ENCODE measurements at regions of chr2 and their contacts with region 1.

Region 1: GRCh38 chr2:134897932-134898331 is 20.7 kb upstream of the CCNT2 start:
- DNase-seq: peak; percentile 24
- ATAC-seq: no peak
- H3K4me3 ChIP-seq: no peak overlapping the region
- H3K4me3 Mint-ChIP-seq: no peak overlapping the region
- H3K27ac ChIP-seq: no peak overlapping the region
- H3K27ac Mint-ChIP-seq: no peak overlapping the region
- H3K4me1 ChIP-seq: no peaks in the 10 kb centered on the region
- H3K4me1 Mint-ChIP-seq: no peaks in the 10 kb centered on the region
- H3K27me3 ChIP-seq: no peaks in the 10 kb centered on the region
- H3K27me3 Mint-ChIP-seq: no peaks in the 10 kb centered on the region
- CTCF ChIP-seq: peak; percentile 84

Region 2: GRCh38 chr2:134453973-134454372 is 444.0 kb before region 1 on chr2:
- CTCF ChIA-PET with region 1: interaction called, 35 read pairs
- POLR2A ChIA-PET with region 1: no interaction called
- intact Hi-C with region 1: loop called (anchors 1 kb)
- DNase-seq: no peak
- ATAC-seq: no peak
- H3K4me3 ChIP-seq: no peak overlapping the region
- H3K4me3 Mint-ChIP-seq: no peak overlapping the region
- H3K27ac ChIP-seq: no peak overlapping the region
- H3K27ac Mint-ChIP-seq: no peak overlapping the region
- H3K4me1 ChIP-seq: no peaks in the 10 kb centered on the region
- H3K4me1 Mint-ChIP-seq: no peaks in the 10 kb centered on the region
- H3K27me3 ChIP-seq: no peaks in the 10 kb centered on the region
- H3K27me3 Mint-ChIP-seq: no peaks in the 10 kb centered on the region
- CTCF ChIP-seq: no peak

Region 3: GRCh38 chr2:134460583-134460998 is 437.3 kb before region 1 on chr2:
- CTCF ChIA-PET with region 1: interaction called, 20 read pairs
- POLR2A ChIA-PET with region 1: no interaction called
- intact Hi-C with region 1: no loop called
- DNase-seq: peak; percentile 59
- ATAC-seq: peak; percentile 76
- H3K4me3 ChIP-seq: no peak overlapping the region
- H3K4me3 Mint-ChIP-seq: no peak overlapping the region
- H3K27ac ChIP-seq: no peak overlapping the region
- H3K27ac Mint-ChIP-seq: peak overlapping the region; percentile 37
- H3K4me1 ChIP-seq: no peaks in the 10 kb centered on the region
- H3K4me1 Mint-ChIP-seq: peaks cover 3% of the 10 kb centered on the region
- H3K27me3 ChIP-seq: no peaks in the 10 kb centered on the region
- H3K27me3 Mint-ChIP-seq: no peaks in the 10 kb centered on the region
- CTCF ChIP-seq: peak; percentile 61

Region 4: DNA sequence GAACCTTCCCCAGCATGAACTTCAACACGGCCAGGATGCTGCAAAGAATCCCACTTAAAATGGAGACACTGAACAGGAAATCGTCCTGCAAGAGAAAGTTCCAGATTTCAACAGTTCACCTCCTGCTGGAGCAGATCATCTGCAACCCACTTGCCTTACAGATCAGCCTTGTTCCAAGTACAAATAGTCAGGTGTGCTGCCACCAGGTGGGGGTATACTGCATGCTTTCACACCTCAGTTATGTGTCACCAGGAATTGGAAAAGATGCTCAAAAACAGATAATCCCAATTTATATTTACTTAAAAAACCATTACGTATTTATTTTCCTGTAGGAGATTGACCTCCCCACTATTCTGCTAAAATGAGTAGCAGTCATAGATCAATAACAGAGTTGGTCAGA is 431.8 kb before region 1 on chr2:
- CTCF ChIA-PET with region 1: interaction called, 20 read pairs
- POLR2A ChIA-PET with region 1: no interaction called
- intact Hi-C with region 1: no loop called
- DNase-seq: peak; percentile 43
- ATAC-seq: no peak
- H3K4me3 ChIP-seq: no peak overlapping the region
- H3K4me3 Mint-ChIP-seq: no peak overlapping the region
- H3K27ac ChIP-seq: no peak overlapping the region
- H3K27ac Mint-ChIP-seq: no peak overlapping the region
- H3K4me1 ChIP-seq: no peaks in the 10 kb centered on the region
- H3K4me1 Mint-ChIP-seq: no peaks in the 10 kb centered on the region
- H3K27me3 ChIP-seq: no peaks in the 10 kb centered on the region
- H3K27me3 Mint-ChIP-seq: no peaks in the 10 kb centered on the region
- CTCF ChIP-seq: peak; percentile 24

Region 5: DNA sequence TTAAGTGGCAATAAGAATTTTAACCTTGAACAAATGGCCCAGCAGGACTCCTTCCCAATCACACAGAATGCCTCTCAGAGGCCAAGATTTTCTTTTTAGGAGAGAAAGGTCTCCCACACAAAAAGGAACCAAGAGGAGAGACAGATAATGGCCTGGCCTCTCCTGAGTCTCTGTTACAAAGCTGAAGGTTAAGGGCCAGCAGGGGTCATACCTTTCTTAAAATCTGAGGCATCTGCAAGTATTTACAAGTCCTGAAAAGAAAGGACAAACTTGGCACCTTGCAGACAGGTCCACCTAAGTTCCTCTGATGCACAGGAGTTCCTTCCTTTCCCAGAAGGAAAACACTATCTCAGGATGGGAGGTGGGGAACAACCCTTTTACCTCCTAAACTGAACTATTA is 321.5 kb before region 1 on chr2:
- CTCF ChIA-PET with region 1: interaction called, 6 read pairs
- POLR2A ChIA-PET with region 1: no interaction called
- intact Hi-C with region 1: loop called (anchors 1 kb)
- DNase-seq: peak; percentile 10
- ATAC-seq: no peak
- H3K4me3 ChIP-seq: no peak overlapping the region
- H3K4me3 Mint-ChIP-seq: no peak overlapping the region
- H3K27ac ChIP-seq: no peak overlapping the region
- H3K27ac Mint-ChIP-seq: no peak overlapping the region
- H3K4me1 ChIP-seq: peaks cover 1 to 6% of the 10 kb centered on the region in 2 donors
- H3K4me1 Mint-ChIP-seq: peaks cover 5% of the 10 kb centered on the region
- H3K27me3 ChIP-seq: no peaks in the 10 kb centered on the region
- H3K27me3 Mint-ChIP-seq: no peaks in the 10 kb centered on the region
- CTCF ChIP-seq: no peak

Region 6: DNA sequence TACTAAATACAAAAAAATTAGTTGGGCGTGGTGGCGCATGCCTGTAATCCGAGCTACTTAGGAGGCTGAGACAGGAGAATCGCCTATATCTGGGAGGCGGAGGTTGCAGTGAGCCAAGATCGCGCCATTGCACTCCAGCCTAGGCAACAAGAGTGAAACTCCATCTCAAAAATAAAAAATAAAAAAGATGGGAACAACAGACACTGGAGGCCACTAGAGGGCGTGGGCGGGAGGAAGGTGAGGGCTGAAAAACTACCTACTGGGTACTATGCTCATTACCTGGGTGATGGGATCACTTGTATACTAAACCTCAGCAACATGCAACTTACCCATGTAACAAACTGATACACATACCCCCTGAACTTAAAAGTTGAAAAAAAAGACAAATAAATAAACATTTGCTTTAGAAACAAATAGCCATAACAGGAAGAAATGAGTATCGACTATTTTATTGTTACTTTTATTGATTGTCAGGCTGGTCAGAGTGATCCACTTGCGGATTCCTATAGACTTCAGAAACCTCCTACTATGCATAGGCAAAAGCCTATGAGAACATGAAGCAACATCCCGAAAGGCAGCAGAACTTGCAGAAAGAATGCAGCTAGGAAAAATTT is 240.2 kb before region 1 on chr2:
- CTCF ChIA-PET with region 1: interaction called, 4 read pairs
- POLR2A ChIA-PET with region 1: no interaction called
- intact Hi-C with region 1: loop called (anchors 5 kb)
- DNase-seq: peak; percentile 48
- ATAC-seq: no peak
- H3K4me3 ChIP-seq: no peak overlapping the region
- H3K4me3 Mint-ChIP-seq: no peak overlapping the region
- H3K27ac ChIP-seq: no peak overlapping the region
- H3K27ac Mint-ChIP-seq: no peak overlapping the region
- H3K4me1 ChIP-seq: peaks cover 0 to 8% of the 10 kb centered on the region in 2 donors
- H3K4me1 Mint-ChIP-seq: peaks cover 3% of the 10 kb centered on the region
- H3K27me3 ChIP-seq: no peaks in the 10 kb centered on the region
- H3K27me3 Mint-ChIP-seq: no peaks in the 10 kb centered on the region
- CTCF ChIP-seq: peak; percentile 52

Region 7: GRCh38 chr2:134782792-134783191 is 115.1 kb before region 1 on chr2:
- CTCF ChIA-PET with region 1: interaction called, 6 read pairs
- POLR2A ChIA-PET with region 1: no interaction called
- intact Hi-C with region 1: loop called (anchors 5 kb)
- DNase-seq: peak; percentile 59
- ATAC-seq: peak; percentile 47
- H3K4me3 ChIP-seq: no peak overlapping the region
- H3K4me3 Mint-ChIP-seq: no peak overlapping the region
- H3K27ac ChIP-seq: no peak overlapping the region
- H3K27ac Mint-ChIP-seq: no peak overlapping the region
- H3K4me1 ChIP-seq: no peaks in the 10 kb centered on the region
- H3K4me1 Mint-ChIP-seq: peaks cover 8% of the 10 kb centered on the region
- H3K27me3 ChIP-seq: peaks cover 0 to 4% (median 0%) of the 10 kb centered on the region in 4 experiments
- H3K27me3 Mint-ChIP-seq: peaks cover 4% of the 10 kb centered on the region
- CTCF ChIP-seq: peak; percentile 65

Region 8: GRCh38 chr2:135258193-135258592 is 360.3 kb after region 1 on chr2:
- CTCF ChIA-PET with region 1: no interaction called
- POLR2A ChIA-PET with region 1: no interaction called
- intact Hi-C with region 1: no loop called
- DNase-seq: no peak
- ATAC-seq: no peak
- H3K4me3 ChIP-seq: no peak overlapping the region
- H3K4me3 Mint-ChIP-seq: no peak overlapping the region
- H3K27ac ChIP-seq: no peak overlapping the region
- H3K27ac Mint-ChIP-seq: no peak overlapping the region
- H3K4me1 ChIP-seq: peaks cover 12 to 23% of the 10 kb centered on the region in 2 donors
- H3K4me1 Mint-ChIP-seq: peaks cover 27% of the 10 kb centered on the region
- H3K27me3 ChIP-seq: no peaks in the 10 kb centered on the region
- H3K27me3 Mint-ChIP-seq: no peaks in the 10 kb centered on the region
- CTCF ChIP-seq: no peak

Measured in B cell (primary cell).